Adrenal gland (tissue), 19 donors: ENCODE measurements at regions of chr15 and their contacts with region 1.

Region 1: DNA sequence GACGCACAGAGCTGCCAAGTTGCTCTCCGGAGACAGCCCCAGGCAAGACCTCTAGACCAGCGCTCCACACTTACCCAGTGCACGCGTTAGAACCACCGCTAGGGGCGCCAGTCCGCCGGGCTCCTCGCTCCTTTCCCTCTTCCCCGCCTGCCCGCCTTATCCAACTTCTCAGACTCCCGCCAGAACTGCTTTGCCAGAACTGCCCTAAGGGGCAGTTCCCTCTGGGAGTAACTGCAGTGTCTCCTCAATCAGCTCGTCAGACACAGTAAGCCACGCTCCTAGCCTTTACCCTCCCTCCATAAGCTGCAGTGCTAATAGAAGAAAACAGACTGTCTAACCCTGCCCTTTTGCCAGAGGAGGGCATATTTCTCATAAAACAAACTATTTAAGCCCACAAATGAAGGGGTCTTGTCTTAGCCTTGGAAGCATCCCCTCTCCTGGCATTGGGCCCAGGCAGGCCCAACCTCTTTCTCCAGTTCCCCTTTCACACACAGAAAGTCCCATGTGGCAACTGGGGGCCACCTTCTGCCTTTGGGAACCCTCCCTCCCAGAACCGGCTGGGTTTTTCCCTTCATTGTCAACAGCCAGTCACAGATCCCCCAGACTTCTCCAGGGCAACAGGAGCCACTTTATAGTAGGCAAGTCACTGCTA is 3.7 kb downstream of the BMF start:
- DNase-seq: peak; percentile 83 to 96 (median 89)
- H3K4me3 ChIP-seq: no peak overlapping the region
- H3K27ac ChIP-seq: peak overlapping the region in 2 of 5 donors; percentile 61 to 81
- H3K4me1 ChIP-seq: peaks cover 25 to 78% of the 10 kb centered on the region in 2 donors
- H3K27me3 ChIP-seq: no peaks in the 10 kb centered on the region
- CTCF ChIP-seq: peak; percentile 74 to 97 (median 90)
- POLR2A ChIP-seq: no peak

Region 2: DNA sequence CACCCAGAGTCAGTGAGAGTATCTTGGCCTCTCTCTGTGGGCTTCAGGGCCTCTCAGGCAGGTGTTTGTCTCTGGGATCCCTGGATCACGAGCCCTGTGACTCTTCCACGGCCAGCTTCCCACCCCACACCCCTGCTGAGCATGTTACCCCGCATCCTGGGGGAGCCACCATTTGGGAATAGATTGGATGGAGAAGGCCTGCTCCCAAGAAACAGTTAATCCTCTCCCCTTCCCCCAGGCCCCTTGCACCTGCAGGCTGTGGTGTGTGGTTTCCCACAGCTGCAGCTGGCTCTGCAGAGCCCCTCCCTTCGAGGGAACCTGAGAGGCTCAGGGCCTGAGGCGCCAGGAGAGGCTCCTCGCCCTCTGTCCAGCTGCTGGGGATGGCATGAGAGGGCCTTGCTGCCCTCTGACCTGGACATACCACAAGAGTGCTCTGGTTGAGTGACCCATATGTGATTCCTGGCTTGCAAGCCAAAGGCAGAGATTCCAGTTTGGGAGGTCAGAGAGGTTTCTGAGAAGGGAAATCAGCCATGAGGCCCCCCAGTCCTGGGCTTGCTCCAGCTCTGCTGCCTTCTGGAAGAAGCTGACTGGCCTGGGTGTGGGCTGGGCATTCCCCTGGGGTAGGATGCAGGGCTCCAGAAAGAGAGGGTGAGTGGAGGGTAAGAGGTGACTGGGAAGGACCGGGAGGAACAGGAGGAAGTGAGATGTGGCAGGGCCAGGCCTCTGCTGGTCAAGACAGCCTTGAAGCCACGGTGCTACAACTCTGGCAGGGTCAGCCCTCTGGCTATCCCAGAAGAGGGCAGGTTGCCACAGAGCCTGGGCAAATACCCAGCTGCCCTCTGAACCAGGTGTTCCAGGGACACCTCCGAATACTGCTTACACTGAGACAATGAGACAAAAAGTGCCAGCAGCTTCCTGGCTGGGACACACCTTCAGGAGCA is 50.1 kb before region 1 on chr15:
- intact Hi-C with region 1: loop called in 1 of 2 experiments (anchors 5 kb)
- DNase-seq: peak in 5 of 7 donors; percentile 12 to 66 (median 46)
- H3K4me3 ChIP-seq: no peak overlapping the region
- H3K27ac ChIP-seq: no peak overlapping the region
- H3K4me1 ChIP-seq: peaks cover 3 to 11% of the 10 kb centered on the region in 2 donors
- H3K27me3 ChIP-seq: no peaks in the 10 kb centered on the region
- CTCF ChIP-seq: no peak
- POLR2A ChIP-seq: no peak